Panc1 (cell line): ENCODE measurements at regions of chr2 and their contacts with region 1.

Region 1: DNA sequence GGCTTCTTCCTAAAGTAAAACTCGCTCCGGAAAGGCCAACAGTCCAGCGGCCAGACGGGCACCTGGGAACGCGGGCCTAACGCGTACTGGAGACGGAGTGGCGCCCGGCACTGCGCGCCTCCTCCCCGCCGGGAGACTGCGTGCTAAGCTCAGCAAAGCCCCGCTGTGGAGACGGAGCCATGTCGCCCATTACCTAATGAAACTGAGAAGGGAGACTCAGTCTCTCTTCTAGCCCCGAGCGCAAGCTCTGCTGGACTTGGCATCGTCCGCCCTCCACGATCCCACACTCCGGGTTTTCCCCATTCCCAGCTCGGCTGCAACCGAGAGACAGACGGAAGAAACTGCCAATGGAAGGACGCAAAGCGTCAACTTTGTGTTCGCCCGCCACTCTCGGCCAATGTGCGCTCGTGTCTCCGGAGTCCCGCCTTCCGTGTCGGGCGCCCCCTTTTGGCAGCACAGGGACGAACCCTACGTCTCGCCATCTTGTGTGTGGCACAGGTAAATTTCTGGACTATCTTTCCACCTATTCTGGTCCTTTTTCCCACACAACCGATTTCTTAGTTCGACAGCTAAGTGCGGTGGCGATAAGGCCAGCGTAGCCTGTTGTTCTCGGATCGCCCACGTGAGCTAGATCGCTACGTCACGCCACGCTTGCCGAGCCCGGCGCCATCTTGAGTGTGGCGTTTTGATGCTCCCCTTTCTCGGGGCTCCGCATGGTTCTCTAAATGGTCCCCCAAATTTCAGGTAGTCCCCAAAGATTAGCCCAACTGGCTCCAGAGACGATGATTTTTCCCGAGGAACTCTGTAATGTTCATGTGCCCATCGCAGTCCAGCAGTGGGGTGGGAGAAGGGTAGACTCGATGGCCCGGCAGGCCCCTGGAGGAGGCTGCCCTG is 1.3 kb upstream of the PTMA start:
- DNase-seq: peak; percentile 93
- ATAC-seq: peak; percentile 61
- H3K4me3 ChIP-seq: peak overlapping the region; percentile 75 to 78
- H3K27ac ChIP-seq: peak overlapping the region; percentile 99
- H3K4me1 ChIP-seq: peaks cover 20% of the 10 kb centered on the region
- H3K27me3 ChIP-seq: no peaks in the 10 kb centered on the region
- CTCF ChIP-seq: peak; percentile 97

Region 2: GRCh38 chr2:231769170-231770136 is 62.5 kb after region 1 on chr2:
- CTCF ChIA-PET with region 1: no interaction called
- POLR2A ChIA-PET with region 1: no interaction called
- in situ Hi-C with region 1: no loop called
- intact Hi-C with region 1: no loop called
- DNase-seq: no peak
- ATAC-seq: 0 out of 2 replicates have a peak, but pooled peaks have one; percentile 34
- H3K4me3 ChIP-seq: no peak overlapping the region
- H3K27ac ChIP-seq: no peak overlapping the region
- H3K4me1 ChIP-seq: peaks cover 4% of the 10 kb centered on the region; the same call in 1 of the 2 replicates
- H3K27me3 ChIP-seq: no peaks in the 10 kb centered on the region
- CTCF ChIP-seq: no peak

Region 3: GRCh38 chr2:231800493-231801091 is 93.6 kb after region 1 on chr2:
- CTCF ChIA-PET with region 1: no interaction called
- POLR2A ChIA-PET with region 1: interaction called, 11 read pairs
- in situ Hi-C with region 1: no loop called
- intact Hi-C with region 1: no loop called
- DNase-seq: no peak
- ATAC-seq: peak; percentile 83
- H3K4me3 ChIP-seq: no peak overlapping the region
- H3K27ac ChIP-seq: no peak overlapping the region
- H3K4me1 ChIP-seq: no peaks in the 10 kb centered on the region
- H3K27me3 ChIP-seq: no peaks in the 10 kb centered on the region
- CTCF ChIP-seq: peak; percentile 88